CD8-positive, alpha-beta T cell (primary cell): ENCODE measurements at regions of chr6 and their contacts with region 1.

Region 1: DNA sequence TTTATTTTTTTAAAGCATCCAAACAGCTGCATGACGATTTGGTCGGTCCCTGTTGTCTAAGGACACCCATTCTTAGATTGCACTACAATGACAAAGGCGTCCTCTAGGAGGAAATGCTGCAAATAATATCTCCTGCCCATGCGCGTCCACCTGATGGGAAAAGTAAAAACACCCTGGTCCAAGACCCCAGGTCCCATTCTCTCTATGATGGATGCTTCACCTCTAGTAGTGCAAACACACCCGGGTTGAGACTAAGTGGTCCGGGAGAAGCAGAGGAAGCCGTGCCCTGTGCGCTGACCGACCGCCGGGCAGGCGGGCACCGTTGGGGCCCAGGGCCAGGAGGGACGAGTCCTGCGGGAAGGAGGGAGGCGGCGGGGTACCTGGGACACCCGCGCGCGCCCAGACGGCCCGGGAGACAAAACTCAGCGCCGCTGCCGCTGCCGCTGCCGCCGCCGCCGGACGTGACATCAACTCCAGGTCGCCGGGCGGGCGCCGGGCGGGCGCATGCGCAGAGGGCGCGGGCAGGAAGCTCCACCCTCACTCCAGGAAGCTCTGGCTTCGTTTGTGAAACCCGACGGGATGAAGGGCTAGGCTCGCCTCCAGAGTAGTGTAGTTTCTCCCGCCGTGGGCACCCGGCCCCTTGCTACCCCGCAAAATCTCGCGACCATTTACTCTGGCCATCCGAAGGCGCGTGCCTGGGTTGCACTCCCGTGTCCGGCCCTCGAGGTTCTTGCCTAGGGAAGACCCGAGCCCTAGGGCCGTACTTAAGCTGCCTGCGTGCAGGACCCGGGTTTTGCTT is at the start of gene TBC1D7:
- DNase-seq: peak; percentile 86 to 96 (median 91)
- ATAC-seq: peak; percentile 84
- H3K4me3 ChIP-seq: peak within 1 kb of the TSS; percentile 86 to 90
- H3K4me3 Mint-ChIP-seq: peak within 1 kb of the TSS; percentile 96
- H3K27ac ChIP-seq: peak within 1 kb of the TSS; percentile 81 to 95
- H3K27ac Mint-ChIP-seq: peak within 1 kb of the TSS; percentile 99
- H3K4me1 ChIP-seq: peaks cover 9% of the 10 kb centered on the region
- H3K4me1 Mint-ChIP-seq: peaks cover 22% of the 10 kb centered on the region
- H3K27me3 ChIP-seq: no peaks in the 10 kb centered on the region
- H3K27me3 Mint-ChIP-seq: no peaks in the 10 kb centered on the region
- CTCF ChIP-seq: no peak
- total RNA-seq, gene TBC1D7: 13.7 to 16.0 TPM

Region 2: GRCh38 chr6:11653028-11653583 is 1675.2 kb before region 1 on chr6:
- CTCF ChIA-PET with region 1: no interaction called
- POLR2A ChIA-PET with region 1: no interaction called
- intact Hi-C with region 1: loop called in 1 of 2 experiments (anchors 5 kb)
- DNase-seq: peak in 7 of 9 experiments; percentile 7 to 52 (median 33)
- ATAC-seq: peak; percentile 78
- H3K4me3 ChIP-seq: no peak overlapping the region
- H3K4me3 Mint-ChIP-seq: no peak overlapping the region
- H3K27ac ChIP-seq: no peak overlapping the region
- H3K27ac Mint-ChIP-seq: no peak overlapping the region
- H3K4me1 ChIP-seq: peaks cover 4% of the 10 kb centered on the region
- H3K4me1 Mint-ChIP-seq: peaks cover 4% of the 10 kb centered on the region
- H3K27me3 ChIP-seq: no peaks in the 10 kb centered on the region
- H3K27me3 Mint-ChIP-seq: peaks cover 5% of the 10 kb centered on the region
- CTCF ChIP-seq: no peak

Region 3: GRCh38 chr6:13194852-13195251 is 133.4 kb before region 1 on chr6:
- CTCF ChIA-PET with region 1: interaction called, 4 read pairs
- POLR2A ChIA-PET with region 1: no interaction called
- intact Hi-C with region 1: loop called in 1 of 2 experiments (anchors 5 kb)
- DNase-seq: peak in 2 of 9 experiments; percentile 30 to 44
- ATAC-seq: no peak
- H3K4me3 ChIP-seq: no peak overlapping the region
- H3K4me3 Mint-ChIP-seq: no peak overlapping the region
- H3K27ac ChIP-seq: no peak overlapping the region
- H3K27ac Mint-ChIP-seq: no peak overlapping the region
- H3K4me1 ChIP-seq: no peaks in the 10 kb centered on the region
- H3K4me1 Mint-ChIP-seq: no peaks in the 10 kb centered on the region
- H3K27me3 ChIP-seq: no peaks in the 10 kb centered on the region
- H3K27me3 Mint-ChIP-seq: peaks cover 10% of the 10 kb centered on the region
- CTCF ChIP-seq: no peak

Region 4: GRCh38 chr6:13248053-13248452 is 80.2 kb before region 1 on chr6:
- CTCF ChIA-PET with region 1: no interaction called
- POLR2A ChIA-PET with region 1: no interaction called
- intact Hi-C with region 1: no loop called
- DNase-seq: no peak
- ATAC-seq: no peak
- H3K4me3 ChIP-seq: no peak overlapping the region
- H3K4me3 Mint-ChIP-seq: no peak overlapping the region
- H3K27ac ChIP-seq: no peak overlapping the region
- H3K27ac Mint-ChIP-seq: no peak overlapping the region
- H3K4me1 ChIP-seq: no peaks in the 10 kb centered on the region
- H3K4me1 Mint-ChIP-seq: no peaks in the 10 kb centered on the region
- H3K27me3 ChIP-seq: no peaks in the 10 kb centered on the region
- H3K27me3 Mint-ChIP-seq: peaks cover 6% of the 10 kb centered on the region
- CTCF ChIP-seq: no peak

Region 5: DNA sequence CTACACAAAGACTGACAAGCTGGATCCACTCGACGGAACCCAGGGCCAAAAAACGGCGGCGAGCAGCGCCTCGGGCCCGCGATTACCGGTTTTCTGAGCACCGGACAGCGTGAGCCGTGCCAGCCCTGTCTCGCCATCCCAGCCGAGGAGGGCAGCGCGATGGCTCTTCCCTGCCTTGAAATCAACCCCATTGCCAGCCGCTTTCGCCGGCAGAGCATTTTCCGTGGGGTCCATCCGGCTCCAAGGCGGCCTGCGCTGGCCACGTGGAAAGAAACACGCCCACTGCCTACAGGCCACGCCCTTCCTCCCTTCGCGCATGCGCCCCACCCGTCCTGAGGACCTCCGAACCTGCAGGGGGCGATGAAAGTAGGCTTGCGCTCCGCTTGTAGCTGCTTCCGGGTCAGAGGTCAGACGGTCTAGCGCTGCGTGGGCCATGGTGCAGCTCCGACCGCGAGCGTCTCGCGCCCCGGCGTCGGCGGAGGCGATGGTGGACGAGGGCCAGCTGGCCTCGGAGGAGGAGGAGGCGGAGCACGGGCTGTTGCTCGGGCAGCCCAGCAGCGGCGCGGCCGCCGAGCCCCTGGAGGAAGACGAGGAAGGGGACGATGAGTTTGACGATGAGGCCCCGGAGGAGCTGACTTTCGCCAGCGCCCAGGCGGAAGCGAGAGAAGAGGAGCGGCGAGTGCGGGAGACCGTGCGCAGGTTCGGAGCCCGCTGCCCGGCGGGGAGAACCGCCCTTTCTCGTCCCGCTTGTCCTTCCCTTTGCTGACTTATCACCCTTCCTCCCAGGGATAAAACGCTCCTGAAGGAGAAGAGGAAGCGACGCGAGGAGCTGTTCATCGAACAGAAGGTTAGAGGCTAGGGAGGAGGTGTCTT is 286.9 kb after region 1 on chr6 and contains the start of gene NOL7:
- CTCF ChIA-PET with region 1: interaction called, 3 read pairs
- POLR2A ChIA-PET with region 1: interaction called, 6 read pairs
- intact Hi-C with region 1: loop called (anchors 1 kb)
- DNase-seq: peak; percentile 96 to 99 (median 99)
- ATAC-seq: peak; percentile 93
- H3K4me3 ChIP-seq: peak within 1 kb of the TSS; percentile 86 to 97
- H3K4me3 Mint-ChIP-seq: peak within 1 kb of the TSS; percentile 99
- H3K27ac ChIP-seq: peak within 1 kb of the TSS; percentile 83 to 88
- H3K27ac Mint-ChIP-seq: peak within 1 kb of the TSS; percentile 98
- H3K4me1 ChIP-seq: peaks cover 28% of the 10 kb centered on the region
- H3K4me1 Mint-ChIP-seq: peaks cover 39% of the 10 kb centered on the region
- H3K27me3 ChIP-seq: no peaks in the 10 kb centered on the region
- H3K27me3 Mint-ChIP-seq: no peaks in the 10 kb centered on the region
- CTCF ChIP-seq: peak; percentile 94
- total RNA-seq, gene NOL7: 70.5 to 71.1 TPM

Region 6: DNA sequence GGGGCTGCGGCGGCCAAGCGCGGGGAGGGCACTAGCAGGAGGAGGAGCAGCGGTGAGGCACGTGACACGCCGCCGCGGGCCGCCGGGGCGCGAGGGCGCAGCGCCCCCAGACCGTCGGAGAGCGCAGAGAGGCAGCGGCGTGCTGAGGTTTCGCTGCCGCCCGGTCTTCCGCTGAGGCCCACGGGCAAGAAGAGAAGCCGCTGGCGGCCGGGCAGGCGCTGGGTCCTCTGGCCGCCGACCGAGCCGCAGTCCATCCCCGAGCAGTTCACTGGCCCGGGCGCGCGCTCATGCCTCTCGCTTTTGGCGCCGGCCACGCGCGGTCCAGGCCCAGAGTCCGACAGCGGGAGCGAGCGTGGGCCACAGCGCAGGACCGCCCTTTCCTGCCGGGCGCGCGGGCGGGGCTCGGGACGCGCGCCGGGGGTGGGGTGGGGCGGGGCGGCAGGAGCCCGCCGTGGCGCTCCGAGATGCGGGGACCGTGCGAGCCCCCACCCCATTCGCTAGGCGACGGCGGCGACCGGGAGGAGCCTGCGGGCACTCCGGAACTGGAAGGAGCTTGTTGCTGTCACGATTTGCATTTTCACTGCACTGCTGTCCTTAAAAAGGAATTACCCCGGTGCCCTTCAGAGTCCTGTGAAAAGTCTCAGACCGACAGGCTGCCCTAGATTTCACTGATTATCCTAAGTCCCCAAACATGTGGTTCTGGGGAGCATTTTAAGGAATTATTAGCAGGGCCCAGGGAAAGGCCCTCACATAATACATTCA is 486.1 kb after region 1 on chr6 and contains the start of gene MCUR1:
- CTCF ChIA-PET with region 1: no interaction called
- POLR2A ChIA-PET with region 1: no interaction called
- intact Hi-C with region 1: loop called (anchors 2 to 10 kb)
- DNase-seq: peak; percentile 51 to 92 (median 74)
- ATAC-seq: peak; percentile 80
- H3K4me3 ChIP-seq: peak within 1 kb of the TSS; percentile 71
- H3K4me3 Mint-ChIP-seq: peak within 1 kb of the TSS; percentile 87
- H3K27ac ChIP-seq: peak within 1 kb of the TSS; percentile 61 to 76
- H3K27ac Mint-ChIP-seq: peak within 1 kb of the TSS; percentile 85
- H3K4me1 ChIP-seq: peaks cover 14% of the 10 kb centered on the region
- H3K4me1 Mint-ChIP-seq: peaks cover 34% of the 10 kb centered on the region
- H3K27me3 ChIP-seq: no peaks in the 10 kb centered on the region
- H3K27me3 Mint-ChIP-seq: no peaks in the 10 kb centered on the region
- CTCF ChIP-seq: no peak
- total RNA-seq, gene MCUR1: 2.1 to 3.4 TPM

Region 7: GRCh38 chr6:14210663-14211561 is 882.6 kb after region 1 on chr6:
- CTCF ChIA-PET with region 1: no interaction called
- POLR2A ChIA-PET with region 1: no interaction called
- intact Hi-C with region 1: loop called in 1 of 2 experiments (anchors 2 kb)
- DNase-seq: peak; percentile 79 to 95 (median 85)
- ATAC-seq: peak; percentile 89
- H3K4me3 ChIP-seq: peak overlapping the region; percentile 52 to 78
- H3K4me3 Mint-ChIP-seq: peak overlapping the region; percentile 89
- H3K27ac ChIP-seq: peak overlapping the region; percentile 11 to 64
- H3K27ac Mint-ChIP-seq: peak overlapping the region; percentile 74
- H3K4me1 ChIP-seq: peaks cover 16% of the 10 kb centered on the region
- H3K4me1 Mint-ChIP-seq: peaks cover 14% of the 10 kb centered on the region
- H3K27me3 ChIP-seq: no peaks in the 10 kb centered on the region
- H3K27me3 Mint-ChIP-seq: no peaks in the 10 kb centered on the region
- CTCF ChIP-seq: peak; percentile 76